ENCODE measurements at regions of chr16 and their contacts with region 1.

Region 1: DNA sequence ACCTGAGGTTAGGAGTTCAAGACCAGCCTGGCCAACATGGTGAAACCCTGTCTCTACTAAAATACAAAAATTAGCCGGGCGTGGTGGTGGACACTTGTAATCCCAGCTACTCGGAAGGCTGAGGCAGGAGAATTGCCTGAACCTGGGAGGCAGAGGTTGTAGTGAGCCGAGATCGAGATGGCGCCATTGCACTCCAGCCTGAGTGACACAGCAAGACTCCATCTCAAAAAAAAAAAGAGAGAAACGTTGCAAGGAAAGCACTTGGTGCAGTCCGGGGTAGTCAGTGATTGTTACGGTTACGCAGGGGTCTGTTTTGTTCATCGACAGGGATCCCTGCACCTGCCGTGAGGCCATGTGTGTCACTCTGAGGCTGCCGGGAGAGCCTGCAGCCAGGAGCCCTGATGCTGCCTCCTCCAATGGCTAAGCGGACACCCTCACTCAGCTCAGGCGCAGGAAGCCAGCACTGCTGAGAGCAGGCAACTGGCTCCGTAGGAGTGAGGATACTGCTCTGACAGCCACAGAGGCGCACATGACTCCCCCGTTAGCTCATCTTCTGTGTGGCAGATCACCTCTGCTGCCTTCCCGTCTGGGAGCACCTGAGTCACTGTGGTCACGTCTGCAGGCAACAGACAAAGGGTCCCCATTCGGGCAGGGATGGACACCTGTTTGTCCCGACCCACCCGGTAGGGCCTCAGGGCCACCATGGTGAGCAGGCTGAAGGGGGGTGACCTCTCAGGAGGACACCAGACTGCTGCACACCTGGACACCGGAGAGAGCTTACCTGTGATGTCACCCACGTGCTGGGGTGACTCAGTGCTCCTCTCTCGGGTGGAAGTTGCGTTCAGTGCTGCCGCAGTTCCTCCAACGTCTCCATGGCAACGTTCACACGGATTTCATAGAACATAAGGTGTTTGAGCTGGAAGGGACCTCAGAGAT is 5.2 kb upstream of the RAB26 start:
- DNase-seq: no peak
- ATAC-seq: no peak
- H3K4me3 ChIP-seq: no peak overlapping the region
- H3K27ac ChIP-seq: no peak overlapping the region
- H3K4me1 ChIP-seq: no peaks in the 10 kb centered on the region
- H3K27me3 ChIP-seq: no peaks in the 10 kb centered on the region

Region 2: GRCh38 chr16:1734123-1734832 is 408.9 kb before region 1 on chr16:
- intact Hi-C with region 1: no loop called
- DNase-seq: no peak
- ATAC-seq: no peak
- H3K4me3 ChIP-seq: no peak overlapping the region
- H3K27ac ChIP-seq: no peak overlapping the region
- H3K4me1 ChIP-seq: no peaks in the 10 kb centered on the region
- H3K27me3 ChIP-seq: no peaks in the 10 kb centered on the region

Region 3: GRCh38 chr16:1909561-1910231 is 233.5 kb before region 1 on chr16:
- intact Hi-C with region 1: no loop called
- DNase-seq: peak in 1 of 2 donors; percentile 54
- ATAC-seq: no peak
- H3K4me3 ChIP-seq: no peak overlapping the region
- H3K27ac ChIP-seq: no peak overlapping the region
- H3K4me1 ChIP-seq: no peaks in the 10 kb centered on the region
- H3K27me3 ChIP-seq: no peaks in the 10 kb centered on the region

Region 4: DNA sequence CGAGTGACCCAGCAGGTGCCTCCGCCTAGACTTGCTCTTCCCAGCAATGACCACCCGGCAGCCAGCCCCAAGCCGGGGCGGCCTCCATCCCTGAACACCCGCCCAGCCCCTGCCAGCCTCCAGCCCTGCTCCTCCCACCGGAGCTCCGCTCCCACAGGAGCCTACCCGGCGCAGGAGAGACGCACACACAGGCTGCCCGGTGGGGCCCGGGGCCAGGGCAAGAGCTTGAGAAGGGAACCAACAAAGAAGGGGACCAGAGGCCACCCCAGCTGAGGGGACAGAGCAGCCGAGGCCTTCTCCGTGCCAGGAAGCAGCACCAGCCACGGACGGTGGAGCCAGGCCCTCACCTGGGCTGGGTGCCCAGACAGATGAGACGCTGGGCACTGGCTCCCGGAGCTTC is 21.4 kb before region 1 on chr16:
- intact Hi-C with region 1: loop called in 1 of 2 experiments (anchors 2 kb)
- DNase-seq: peak in 1 of 2 donors; percentile 71
- ATAC-seq: no peak
- H3K4me3 ChIP-seq: peak overlapping the region in 1 of 2 donors; percentile 6
- H3K27ac ChIP-seq: peak overlapping the region; percentile 44 to 87
- H3K4me1 ChIP-seq: no peaks in the 10 kb centered on the region
- H3K27me3 ChIP-seq: no peaks in the 10 kb centered on the region

Region 5: DNA sequence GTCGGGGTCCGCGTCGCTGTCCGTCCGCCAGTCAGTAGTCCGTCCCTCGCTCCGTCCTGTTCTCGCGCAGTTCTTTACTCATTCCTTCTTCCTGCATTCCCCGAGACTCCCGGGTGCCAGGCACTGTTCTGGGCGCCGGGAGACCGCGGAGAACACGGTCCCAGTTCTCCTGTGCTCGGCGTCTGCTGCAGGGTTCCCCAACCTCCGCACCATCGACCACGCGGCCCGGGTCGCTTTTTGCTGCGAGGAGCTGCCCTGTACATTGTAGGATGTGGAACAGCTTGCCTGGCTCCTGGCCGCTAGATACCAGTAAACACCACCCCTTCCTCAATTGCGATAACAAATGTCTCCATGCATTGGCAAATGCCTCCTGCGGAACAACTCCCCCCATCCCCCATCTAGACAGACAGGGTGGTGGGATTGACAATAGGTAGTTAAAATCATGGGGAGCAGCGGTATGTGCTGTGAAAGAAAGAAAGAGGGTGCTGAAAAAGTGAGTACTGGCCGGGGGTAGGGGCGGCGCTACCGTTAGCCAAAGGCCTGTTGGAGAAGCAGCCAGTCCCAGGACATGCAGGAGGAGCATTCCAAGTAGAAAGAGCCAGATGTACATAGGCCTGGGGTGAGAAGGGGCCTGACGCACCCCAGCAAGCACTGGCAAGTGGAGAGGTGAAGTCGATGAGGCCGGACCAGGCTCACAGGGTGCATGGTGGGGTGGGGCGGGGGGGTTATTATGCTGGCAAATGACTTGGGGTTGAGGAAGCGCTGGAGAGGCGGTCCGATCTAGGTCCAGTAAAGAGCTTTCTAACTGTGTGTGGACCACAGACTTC is 13.0 kb after region 1 on chr16:
- intact Hi-C with region 1: no loop called
- DNase-seq: peak; percentile 58 to 78
- ATAC-seq: no peak
- H3K4me3 ChIP-seq: peak overlapping the region; percentile 50 to 56
- H3K27ac ChIP-seq: peak overlapping the region in 1 of 2 donors; percentile 33
- H3K4me1 ChIP-seq: no peaks in the 10 kb centered on the region
- H3K27me3 ChIP-seq: no peaks in the 10 kb centered on the region

Region 6: GRCh38 chr16:2253293-2253692 is 110.1 kb after region 1 on chr16:
- intact Hi-C with region 1: no loop called
- DNase-seq: no peak
- ATAC-seq: no peak
- H3K4me3 ChIP-seq: no peak overlapping the region
- H3K27ac ChIP-seq: no peak overlapping the region
- H3K4me1 ChIP-seq: no peaks in the 10 kb centered on the region
- H3K27me3 ChIP-seq: no peaks in the 10 kb centered on the region